ENCODE measurements at regions of chr11 and their contacts with region 1.

Region 1: GRCh38 chr11:62394825-62395538 is 23.9 kb upstream of the SCGB1A1 start:
- DNase-seq: peak; percentile 54
- ATAC-seq: peak; percentile 79
- H3K4me3 Mint-ChIP-seq: no peak overlapping the region
- H3K27ac Mint-ChIP-seq: no peak overlapping the region
- H3K4me1 Mint-ChIP-seq: peaks cover 23% of the 10 kb centered on the region
- H3K27me3 Mint-ChIP-seq: no peaks in the 10 kb centered on the region
- CTCF ChIP-seq: peak; percentile 76

Region 2: DNA sequence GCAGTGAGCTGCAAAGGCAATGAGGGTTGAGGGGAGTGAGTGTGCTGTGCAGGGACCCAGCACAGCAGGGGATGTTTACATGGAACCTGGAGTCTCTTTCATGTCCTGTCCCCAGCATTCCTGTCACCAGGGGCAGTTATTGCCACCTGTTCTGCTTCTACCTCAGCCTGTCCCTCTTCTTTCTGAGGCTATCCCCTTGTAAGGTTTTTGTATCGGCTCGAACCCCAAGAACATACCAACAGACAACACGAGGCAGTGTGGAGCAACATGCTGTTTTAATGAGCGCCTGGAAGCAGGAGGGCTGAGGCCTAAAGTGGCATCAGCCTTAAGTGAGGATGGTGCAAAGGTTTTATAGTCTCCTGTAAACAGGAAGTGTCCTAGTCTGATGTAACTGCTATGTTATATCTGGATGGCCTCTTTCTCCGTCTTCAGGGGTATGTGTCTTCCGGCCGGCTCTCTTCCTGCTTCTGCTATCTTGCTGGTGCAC is 121.2 kb before region 1 on chr11:
- CTCF ChIA-PET with region 1: no interaction called
- POLR2A ChIA-PET with region 1: no interaction called
- intact Hi-C with region 1: no loop called
- DNase-seq: no peak
- ATAC-seq: no peak
- H3K4me3 Mint-ChIP-seq: no peak overlapping the region
- H3K27ac Mint-ChIP-seq: no peak overlapping the region
- H3K4me1 Mint-ChIP-seq: no peaks in the 10 kb centered on the region
- H3K27me3 Mint-ChIP-seq: peaks cover 4% of the 10 kb centered on the region
- CTCF ChIP-seq: no peak

Region 3: DNA sequence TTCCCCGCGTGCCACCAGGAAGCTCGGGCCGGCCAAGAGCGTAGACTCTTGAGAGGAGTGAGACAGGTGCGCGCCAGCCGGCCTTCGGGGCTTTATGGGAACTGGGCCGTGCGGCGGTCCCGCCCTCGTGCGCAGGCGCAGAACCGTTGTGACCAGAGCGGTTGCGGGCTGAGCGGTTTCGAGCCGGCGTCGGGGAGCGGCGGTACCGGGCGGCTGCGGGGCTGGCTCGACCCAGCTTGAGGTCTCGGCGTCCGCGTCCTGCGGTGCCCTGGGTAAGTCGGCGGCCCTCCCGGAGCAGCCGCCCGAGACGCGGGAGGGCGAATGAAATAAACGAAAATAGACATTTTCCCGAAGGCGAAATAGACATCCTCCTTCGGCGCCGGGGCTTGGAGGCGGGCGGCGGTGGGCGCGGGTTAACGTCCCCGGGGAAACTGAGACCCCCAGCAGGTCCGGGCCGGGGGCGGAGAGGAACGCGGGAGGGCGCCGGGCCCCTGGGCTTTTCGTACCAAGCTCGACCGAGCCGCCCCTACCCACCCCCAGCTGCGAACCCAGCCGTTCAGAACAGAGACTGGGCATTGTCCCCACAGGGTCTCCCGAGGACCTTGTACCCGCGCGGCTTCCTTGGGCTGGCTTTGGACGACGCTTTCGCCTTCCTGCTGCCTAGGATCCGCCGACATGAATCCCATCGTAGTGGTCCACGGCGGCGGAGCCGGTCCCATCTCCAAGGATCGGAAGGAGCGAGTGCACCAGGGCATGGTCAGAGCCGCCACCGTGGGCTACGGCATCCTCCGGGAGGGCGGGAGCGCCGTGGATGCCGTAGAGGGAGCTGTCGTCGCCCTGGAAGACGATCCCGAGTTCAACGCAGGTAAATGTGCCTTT is 57.4 kb before region 1 on chr11 and contains the start of gene ASRGL1:
- CTCF ChIA-PET with region 1: interaction called, 10 read pairs
- POLR2A ChIA-PET with region 1: no interaction called
- intact Hi-C with region 1: no loop called
- DNase-seq: peak; percentile 80
- ATAC-seq: peak; percentile 84
- H3K4me3 Mint-ChIP-seq: peak within 1 kb of the TSS; percentile 80
- H3K27ac Mint-ChIP-seq: peak within 1 kb of the TSS; percentile 32
- H3K4me1 Mint-ChIP-seq: peaks cover 8% of the 10 kb centered on the region
- H3K27me3 Mint-ChIP-seq: peaks cover 4% of the 10 kb centered on the region
- CTCF ChIP-seq: no peak
- total RNA-seq, gene ASRGL1: 6.4 to 6.7 TPM

Region 4: GRCh38 chr11:62383822-62384221 is 11.2 kb before region 1 on chr11:
- CTCF ChIA-PET with region 1: interaction called, 25 read pairs
- POLR2A ChIA-PET with region 1: no interaction called
- intact Hi-C with region 1: no loop called
- DNase-seq: no peak
- ATAC-seq: no peak
- H3K4me3 Mint-ChIP-seq: no peak overlapping the region
- H3K27ac Mint-ChIP-seq: no peak overlapping the region
- H3K4me1 Mint-ChIP-seq: peaks cover 7% of the 10 kb centered on the region
- H3K27me3 Mint-ChIP-seq: no peaks in the 10 kb centered on the region
- CTCF ChIP-seq: no peak

Region 5: GRCh38 chr11:62413060-62413696 is 18.2 kb after region 1 on chr11:
- CTCF ChIA-PET with region 1: interaction called, 11 read pairs
- POLR2A ChIA-PET with region 1: no interaction called
- intact Hi-C with region 1: no loop called
- DNase-seq: no peak
- ATAC-seq: no peak
- H3K4me3 Mint-ChIP-seq: no peak overlapping the region
- H3K27ac Mint-ChIP-seq: no peak overlapping the region
- H3K4me1 Mint-ChIP-seq: no peaks in the 10 kb centered on the region
- H3K27me3 Mint-ChIP-seq: no peaks in the 10 kb centered on the region
- CTCF ChIP-seq: no peak

Region 6: DNA sequence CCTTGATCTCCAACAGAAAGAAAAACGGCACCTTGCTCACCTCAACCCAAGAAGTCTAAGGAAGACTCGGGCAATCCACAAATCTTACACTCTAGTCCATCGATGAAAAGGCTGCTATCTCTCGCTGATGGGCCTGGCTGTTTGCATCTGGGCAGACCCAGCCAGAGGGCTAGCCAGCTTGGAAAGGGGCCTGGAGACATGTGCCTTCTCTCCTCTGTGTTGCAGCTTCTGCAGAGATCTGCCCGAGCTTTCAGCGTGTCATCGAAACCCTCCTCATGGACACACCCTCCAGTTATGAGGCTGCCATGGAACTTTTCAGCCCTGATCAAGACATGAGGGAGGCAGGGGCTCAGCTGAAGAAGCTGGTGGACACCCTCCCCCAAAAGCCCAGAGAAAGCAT is 27.0 kb after region 1 on chr11:
- CTCF ChIA-PET with region 1: interaction called, 72 read pairs
- POLR2A ChIA-PET with region 1: interaction called, 7 read pairs
- intact Hi-C with region 1: no loop called
- DNase-seq: no peak
- ATAC-seq: no peak
- H3K4me3 Mint-ChIP-seq: no peak overlapping the region
- H3K27ac Mint-ChIP-seq: no peak overlapping the region
- H3K4me1 Mint-ChIP-seq: peaks cover 12% of the 10 kb centered on the region
- H3K27me3 Mint-ChIP-seq: peaks cover 5% of the 10 kb centered on the region
- CTCF ChIP-seq: no peak

Region 7: DNA sequence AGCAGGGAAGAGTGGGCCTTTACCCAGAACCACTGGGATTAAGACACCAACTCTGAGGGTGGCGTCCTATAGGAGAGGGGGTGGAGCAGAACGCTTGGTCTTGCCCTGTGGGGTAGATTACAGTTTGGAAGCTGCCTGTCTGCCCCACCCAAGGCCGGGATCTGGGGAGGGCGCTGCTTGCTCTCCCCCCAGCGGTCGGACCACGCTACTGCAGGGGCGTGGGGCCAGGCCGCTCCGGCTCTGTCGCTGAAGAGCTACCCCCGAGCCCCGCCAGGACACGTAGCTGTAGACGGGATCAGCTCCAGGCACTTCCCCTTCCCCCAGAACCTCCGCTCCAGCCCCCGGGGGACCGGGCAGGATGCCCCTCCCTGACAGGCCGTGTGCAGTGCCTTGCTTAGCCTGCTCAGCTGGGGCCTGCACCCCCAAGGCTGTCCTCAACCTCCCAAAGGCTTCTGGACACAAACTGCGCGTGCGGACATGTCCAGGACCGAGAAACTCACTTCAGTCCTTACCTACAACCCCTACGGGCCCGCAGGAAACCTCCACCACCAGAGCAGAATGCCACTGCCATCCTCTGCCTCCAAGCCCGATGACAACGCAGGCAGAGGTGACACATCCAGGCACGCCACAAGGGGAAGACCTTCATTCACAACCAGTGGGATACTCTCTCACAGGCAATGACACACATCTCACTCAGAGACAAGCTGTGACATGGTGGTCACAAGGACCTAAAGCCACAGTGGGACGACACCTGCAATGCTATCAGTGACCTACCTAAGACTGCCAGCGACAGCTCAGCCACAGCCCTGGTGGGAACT is 148.0 kb after region 1 on chr11:
- CTCF ChIA-PET with region 1: interaction called, 59 read pairs
- POLR2A ChIA-PET with region 1: interaction called, 4 read pairs
- intact Hi-C with region 1: no loop called
- DNase-seq: peak; percentile 85
- ATAC-seq: peak; percentile 65
- H3K4me3 Mint-ChIP-seq: peak overlapping the region; percentile 79
- H3K27ac Mint-ChIP-seq: peak overlapping the region; percentile 73
- H3K4me1 Mint-ChIP-seq: peaks cover 76% of the 10 kb centered on the region
- H3K27me3 Mint-ChIP-seq: peaks cover 3% of the 10 kb centered on the region
- CTCF ChIP-seq: peak; percentile 100

Region 8: DNA sequence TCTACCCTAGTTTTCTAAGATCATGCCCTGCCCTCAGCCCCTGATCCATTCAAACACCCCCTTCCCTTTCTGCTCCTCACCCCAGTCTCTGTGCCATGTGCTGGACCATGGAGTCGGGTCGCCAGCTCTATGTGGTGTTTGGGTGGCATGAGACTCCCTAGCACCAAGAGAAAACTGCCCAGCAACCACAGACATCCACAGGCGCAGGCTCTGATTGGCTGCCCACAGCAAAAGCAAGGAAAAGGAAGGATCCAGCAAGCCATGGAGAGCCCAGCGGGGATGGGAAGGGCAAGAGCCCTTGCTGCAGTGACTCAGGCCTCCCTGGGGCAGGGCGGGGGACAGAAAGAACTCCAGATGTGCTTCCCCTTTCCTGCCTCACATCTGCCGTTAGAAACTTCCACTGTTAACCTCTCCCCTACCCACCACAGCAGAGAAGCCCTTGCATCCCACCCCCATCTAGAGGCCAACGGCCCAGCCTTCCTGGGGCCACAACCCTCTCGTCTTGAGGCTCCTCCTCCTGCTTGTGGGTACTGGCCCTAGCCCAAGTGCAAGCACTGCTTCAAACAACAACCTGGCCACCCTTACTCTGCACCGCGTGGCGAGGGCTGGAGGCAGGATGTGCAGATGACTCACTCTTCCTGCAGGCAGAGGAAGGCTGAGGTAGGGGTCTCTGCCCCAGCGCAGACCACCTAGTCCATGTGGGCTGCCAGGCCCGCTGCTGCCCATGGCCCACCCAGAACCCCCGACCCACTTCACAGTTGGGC is 161.3 kb after region 1 on chr11:
- CTCF ChIA-PET with region 1: interaction called, 22 read pairs
- POLR2A ChIA-PET with region 1: no interaction called
- intact Hi-C with region 1: no loop called
- DNase-seq: peak; percentile 95
- ATAC-seq: peak; percentile 68
- H3K4me3 Mint-ChIP-seq: peak overlapping the region; percentile 41
- H3K27ac Mint-ChIP-seq: peak overlapping the region; percentile 94
- H3K4me1 Mint-ChIP-seq: peaks cover 92% of the 10 kb centered on the region
- H3K27me3 Mint-ChIP-seq: no peaks in the 10 kb centered on the region
- CTCF ChIP-seq: no peak

Measured in activated CD8-positive, alpha-beta T cell treated with anti-CD3 and anti-CD28 coated beads for 36 hours (primary cell).